ENCODE measurements at regions of chr9 and their contacts with region 1.

Region 1: GRCh38 chr9:86486891-86487837 is 133.0 kb upstream of the TUT7 start:
- DNase-seq: no peak
- ATAC-seq: peak; percentile 76 to 81
- H3K4me3 ChIP-seq: no peak overlapping the region
- H3K27ac ChIP-seq: no peak overlapping the region
- H3K4me1 ChIP-seq: no peaks in the 10 kb centered on the region
- H3K27me3 ChIP-seq: no peaks in the 10 kb centered on the region

Region 2: DNA sequence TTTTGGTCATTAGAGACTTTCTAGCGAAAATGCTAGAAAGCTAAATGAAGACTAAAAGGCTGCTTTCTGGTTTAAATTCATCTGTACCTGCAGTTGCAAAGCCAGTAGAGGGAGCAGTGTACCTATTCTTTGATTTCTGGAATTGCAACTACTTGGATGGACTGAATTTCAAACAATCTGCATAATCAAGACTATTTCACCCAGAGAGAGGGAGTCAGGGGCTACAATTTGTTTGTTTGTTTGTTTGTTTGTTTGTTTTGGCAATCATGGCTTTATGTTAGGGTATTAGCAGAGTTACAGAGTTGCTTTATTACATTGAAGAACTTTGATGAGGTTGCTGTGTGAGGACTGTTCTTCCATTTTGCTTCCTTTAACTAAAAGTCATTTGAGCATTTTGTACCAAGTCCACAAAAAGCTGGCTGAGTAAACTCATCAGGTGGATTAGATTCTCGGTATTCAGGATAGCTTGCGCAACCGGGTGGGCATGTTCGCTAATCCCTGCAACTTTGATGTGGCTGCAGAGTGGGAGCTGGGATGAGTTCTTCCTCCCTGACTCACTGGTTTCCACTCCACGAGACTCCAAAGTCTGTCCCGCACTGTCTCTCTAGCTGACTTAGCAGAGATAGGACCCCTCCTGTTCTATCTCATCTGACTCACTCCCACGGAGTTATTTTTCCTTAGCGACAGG is 53.0 kb before region 1 on chr9:
- intact Hi-C with region 1: loop called in 1 of 4 experiments (anchors 2 kb)
- DNase-seq: peak in 2 of 3 donors; percentile 33 to 46
- ATAC-seq: peak in 1 of 2 donors; percentile 70
- H3K4me3 ChIP-seq: no peak overlapping the region
- H3K27ac ChIP-seq: no peak overlapping the region
- H3K4me1 ChIP-seq: no peaks in the 10 kb centered on the region
- H3K27me3 ChIP-seq: no peaks in the 10 kb centered on the region

Region 3: DNA sequence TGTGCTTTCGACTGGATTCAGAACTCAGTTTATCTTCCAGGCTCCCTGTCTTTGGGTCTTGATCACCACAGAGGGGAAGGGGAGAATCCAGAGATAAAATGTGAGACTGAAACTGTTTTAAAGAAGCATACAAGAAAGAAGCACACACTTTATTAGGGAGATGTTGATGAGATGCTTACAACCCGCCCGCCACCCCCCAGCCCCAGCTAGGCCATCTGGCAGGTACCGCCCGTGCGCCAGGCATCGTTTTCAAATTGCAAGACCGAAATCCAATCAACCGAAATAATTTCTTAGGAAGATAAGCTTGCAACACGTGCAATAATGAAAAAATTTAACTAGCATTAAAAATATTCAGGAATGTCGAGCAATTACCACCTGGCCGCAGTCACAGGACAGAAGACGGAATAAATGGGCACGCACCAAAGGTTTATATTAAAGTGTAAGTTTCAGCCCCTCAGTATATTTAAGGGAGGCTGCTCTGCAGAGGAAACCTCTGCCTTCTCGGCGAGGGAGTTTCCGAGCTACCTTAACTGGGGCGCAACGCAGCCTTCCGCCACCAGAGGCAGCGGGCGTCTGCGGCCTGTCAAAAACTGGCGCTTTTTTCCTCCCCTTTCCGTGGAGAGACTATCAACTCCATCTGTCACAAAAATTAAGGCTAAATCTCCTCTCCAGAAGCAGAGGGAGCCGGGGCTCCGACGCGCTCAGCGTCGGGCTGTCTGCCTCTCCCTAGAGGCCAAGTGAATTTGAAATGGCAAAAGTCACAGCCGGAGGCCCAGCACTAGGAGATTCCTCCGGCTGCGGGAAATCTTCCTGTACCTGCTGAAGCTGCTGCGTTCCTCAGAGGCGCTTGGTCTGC is 461.1 kb after region 1 on chr9:
- intact Hi-C with region 1: loop called in 1 of 4 experiments (anchors 10 kb)
- DNase-seq: peak; percentile 80 to 93 (median 91)
- ATAC-seq: peak; percentile 76 to 84
- H3K4me3 ChIP-seq: peak overlapping the region; percentile 95
- H3K27ac ChIP-seq: peak overlapping the region; percentile 75
- H3K4me1 ChIP-seq: no peaks in the 10 kb centered on the region
- H3K27me3 ChIP-seq: no peaks in the 10 kb centered on the region